Calu3 (cell line): ENCODE measurements at regions of chr3 and their contacts with region 1.

Region 1: DNA sequence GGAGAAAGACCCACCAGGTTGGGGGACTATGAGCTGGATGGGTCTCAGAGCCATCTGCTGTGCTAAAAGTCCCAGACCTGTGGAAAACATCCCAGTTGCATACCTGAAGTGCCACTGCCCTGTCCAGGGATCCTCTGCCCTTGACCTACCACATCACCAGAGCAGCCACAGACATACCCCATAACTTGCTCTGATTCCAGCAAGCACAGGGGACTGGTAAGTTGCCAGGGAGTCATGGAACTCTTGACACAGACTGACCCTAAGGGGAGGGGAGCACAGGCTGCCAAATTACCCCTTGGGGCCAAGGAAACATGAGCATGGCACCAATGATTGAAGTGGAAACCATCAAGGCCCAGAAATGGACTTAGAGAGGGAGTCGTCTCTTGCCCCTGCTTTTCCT is 1335.1 kb upstream of the ALCAM start:
- DNase-seq: no peak
- H3K4me3 Mint-ChIP-seq: no peak overlapping the region
- H3K27ac Mint-ChIP-seq: no peak overlapping the region
- H3K4me1 Mint-ChIP-seq: no peaks in the 10 kb centered on the region
- H3K27me3 Mint-ChIP-seq: no peaks in the 10 kb centered on the region
- CTCF ChIP-seq: no peak

Region 2: GRCh38 chr3:102827386-102827785 is 1204.2 kb before region 1 on chr3:
- CTCF ChIA-PET with region 1: interaction called, 12 read pairs
- intact Hi-C with region 1: no loop called
- DNase-seq: no peak
- H3K4me3 Mint-ChIP-seq: no peak overlapping the region
- H3K27ac Mint-ChIP-seq: no peak overlapping the region
- H3K4me1 Mint-ChIP-seq: no peaks in the 10 kb centered on the region
- H3K27me3 Mint-ChIP-seq: no peaks in the 10 kb centered on the region
- CTCF ChIP-seq: no peak

Region 3: GRCh38 chr3:103494011-103494410 is 537.6 kb before region 1 on chr3:
- CTCF ChIA-PET with region 1: no interaction called
- intact Hi-C with region 1: no loop called
- DNase-seq: no peak
- H3K4me3 Mint-ChIP-seq: no peak overlapping the region
- H3K27ac Mint-ChIP-seq: no peak overlapping the region
- H3K4me1 Mint-ChIP-seq: no peaks in the 10 kb centered on the region
- H3K27me3 Mint-ChIP-seq: no peaks in the 10 kb centered on the region
- CTCF ChIP-seq: no peak